ENCODE measurements at regions of chr11 and their contacts with region 1.

Region 1: DNA sequence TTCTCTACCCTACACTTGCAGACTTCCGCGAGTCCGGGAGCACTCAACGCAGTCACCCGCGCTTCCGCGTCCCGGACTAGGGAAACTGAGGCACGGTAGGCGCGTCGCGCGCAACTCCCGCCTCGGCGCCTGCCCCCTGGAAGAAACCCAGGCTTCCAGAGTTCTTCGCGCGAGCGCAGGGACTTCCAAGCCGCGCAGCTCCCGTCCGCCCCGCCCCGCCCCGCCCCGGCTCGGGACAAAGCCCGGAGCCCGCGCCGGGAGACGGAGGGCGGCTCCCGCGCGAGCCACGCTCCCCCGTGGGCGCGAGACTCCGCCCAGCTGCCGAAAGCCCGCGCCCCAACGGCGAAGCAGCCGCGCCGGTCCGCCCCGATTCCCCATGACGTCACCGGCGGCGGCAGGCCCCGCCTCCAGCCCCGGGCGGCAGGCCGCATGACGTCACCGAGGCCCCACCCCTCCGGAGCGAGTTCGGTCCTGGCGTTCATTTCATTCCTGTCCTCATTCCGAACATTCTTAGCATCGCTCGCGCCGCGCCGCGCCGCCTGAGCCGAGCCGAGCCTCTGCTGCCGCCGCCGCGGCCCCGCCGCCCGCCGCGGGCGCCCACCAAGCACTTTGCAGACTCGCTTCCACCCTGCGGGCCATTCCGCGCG is at the start of gene TEAD1:
- DNase-seq: peak; percentile 84
- ATAC-seq: peak; percentile 90
- H3K4me3 ChIP-seq: peak within 1 kb of the TSS; percentile 84 to 100 (median 89)
- H3K27ac ChIP-seq: peak within 1 kb of the TSS; percentile 74
- H3K4me1 ChIP-seq: peaks cover 70% of the 10 kb centered on the region
- H3K27me3 ChIP-seq: no peaks in the 10 kb centered on the region
- CTCF ChIP-seq: no peak
- EP300 ChIP-seq: no peak
- POLR2A ChIP-seq: peak in 1 of 2 experiments; percentile 49; a peak in 2 of 4 replicates
- RAD21 ChIP-seq: no peak; the same call in 1 of the 2 replicates
- total RNA-seq, gene TEAD1: 30.5 and 40.7 TPM in 2 replicates

Region 2: GRCh38 chr11:12693479-12694181 is 19.6 kb after region 1 on chr11:
- CTCF ChIA-PET with region 1: no interaction called
- POLR2A ChIA-PET with region 1: interaction called, 20 read pairs
- in situ Hi-C with region 1: no loop called
- intact Hi-C with region 1: loop called (anchors 2 kb)
- DNase-seq: peak; percentile 48
- ATAC-seq: peak; percentile 47
- H3K4me3 ChIP-seq: peak overlapping the region; percentile 2 to 55 (median 6); a peak in 3 of 6 replicates
- H3K27ac ChIP-seq: peak overlapping the region; percentile 94
- H3K4me1 ChIP-seq: peaks cover 78% of the 10 kb centered on the region
- H3K27me3 ChIP-seq: no peaks in the 10 kb centered on the region
- CTCF ChIP-seq: no peak
- EP300 ChIP-seq: no peak
- POLR2A ChIP-seq: no peak
- RAD21 ChIP-seq: no peak

Region 3: DNA sequence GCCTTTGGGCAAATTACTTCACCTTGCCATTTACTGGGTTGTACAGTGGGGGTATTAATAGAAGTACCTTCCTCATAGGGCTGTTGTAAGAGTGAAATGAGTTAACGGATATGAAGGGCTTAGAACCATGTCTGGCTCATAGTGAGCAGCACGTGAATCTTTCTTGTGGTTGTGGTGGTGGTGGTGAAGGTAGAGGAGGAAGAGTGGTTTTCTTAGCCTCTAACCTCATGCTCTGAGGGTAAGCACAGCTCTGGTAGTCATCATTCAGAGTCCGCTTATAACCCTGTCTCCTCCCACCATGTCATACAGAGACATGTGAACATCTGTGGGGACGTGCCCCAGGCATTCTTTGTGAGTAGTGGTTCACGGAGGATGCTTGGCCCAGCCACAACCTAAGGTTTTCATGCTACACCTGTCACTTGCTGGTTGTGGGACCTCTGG is 43.8 kb after region 1 on chr11:
- CTCF ChIA-PET with region 1: no interaction called
- POLR2A ChIA-PET with region 1: no interaction called
- in situ Hi-C with region 1: no loop called
- intact Hi-C with region 1: no loop called
- DNase-seq: no peak
- ATAC-seq: no peak
- H3K4me3 ChIP-seq: no peak overlapping the region
- H3K27ac ChIP-seq: no peak overlapping the region
- H3K4me1 ChIP-seq: peaks cover 23% of the 10 kb centered on the region
- H3K27me3 ChIP-seq: no peaks in the 10 kb centered on the region
- CTCF ChIP-seq: no peak
- EP300 ChIP-seq: no peak
- POLR2A ChIP-seq: no peak
- RAD21 ChIP-seq: no peak

Region 4: GRCh38 chr11:12802418-12803085 is 128.5 kb after region 1 on chr11:
- CTCF ChIA-PET with region 1: no interaction called
- POLR2A ChIA-PET with region 1: no interaction called
- in situ Hi-C with region 1: no loop called
- intact Hi-C with region 1: loop called (anchors 5 kb)
- DNase-seq: peak; percentile 99
- ATAC-seq: peak; percentile 94
- H3K4me3 ChIP-seq: peak overlapping the region in 1 of 3 experiments; percentile 25; a peak in 2 of 6 replicates
- H3K27ac ChIP-seq: peak overlapping the region; percentile 96
- H3K4me1 ChIP-seq: peaks cover 94% of the 10 kb centered on the region
- H3K27me3 ChIP-seq: no peaks in the 10 kb centered on the region
- CTCF ChIP-seq: no peak
- EP300 ChIP-seq: peak; percentile 95 to 98
- POLR2A ChIP-seq: peak in 1 of 2 experiments; percentile 57; a peak in 1 of 4 replicates
- RAD21 ChIP-seq: peak; percentile 13; the same call in 1 of the 2 replicates

Region 5: GRCh38 chr11:12845739-12846358 is 171.8 kb after region 1 on chr11:
- CTCF ChIA-PET with region 1: no interaction called
- POLR2A ChIA-PET with region 1: interaction called, 8 read pairs
- in situ Hi-C with region 1: no loop called
- intact Hi-C with region 1: loop called (anchors 2 kb)
- DNase-seq: peak; percentile 98
- ATAC-seq: peak; percentile 97
- H3K4me3 ChIP-seq: peak overlapping the region; percentile 38 to 66 (median 51)
- H3K27ac ChIP-seq: peak overlapping the region; percentile 99
- H3K4me1 ChIP-seq: peaks cover 68% of the 10 kb centered on the region
- H3K27me3 ChIP-seq: no peaks in the 10 kb centered on the region
- CTCF ChIP-seq: no peak
- EP300 ChIP-seq: peak; percentile 85 to 90
- POLR2A ChIP-seq: peak; percentile 59 to 82; a peak in 3 of 4 replicates
- RAD21 ChIP-seq: no peak

Region 6: GRCh38 chr11:12864316-12865156 is 190.5 kb after region 1 on chr11:
- CTCF ChIA-PET with region 1: no interaction called
- POLR2A ChIA-PET with region 1: no interaction called
- in situ Hi-C with region 1: no loop called
- intact Hi-C with region 1: no loop called
- DNase-seq: no peak
- ATAC-seq: no peak
- H3K4me3 ChIP-seq: no peak overlapping the region
- H3K27ac ChIP-seq: no peak overlapping the region
- H3K4me1 ChIP-seq: peaks cover 9% of the 10 kb centered on the region; the same call in 1 of the 2 replicates
- H3K27me3 ChIP-seq: no peaks in the 10 kb centered on the region
- CTCF ChIP-seq: no peak
- EP300 ChIP-seq: no peak
- POLR2A ChIP-seq: no peak
- RAD21 ChIP-seq: no peak

Region 7: DNA sequence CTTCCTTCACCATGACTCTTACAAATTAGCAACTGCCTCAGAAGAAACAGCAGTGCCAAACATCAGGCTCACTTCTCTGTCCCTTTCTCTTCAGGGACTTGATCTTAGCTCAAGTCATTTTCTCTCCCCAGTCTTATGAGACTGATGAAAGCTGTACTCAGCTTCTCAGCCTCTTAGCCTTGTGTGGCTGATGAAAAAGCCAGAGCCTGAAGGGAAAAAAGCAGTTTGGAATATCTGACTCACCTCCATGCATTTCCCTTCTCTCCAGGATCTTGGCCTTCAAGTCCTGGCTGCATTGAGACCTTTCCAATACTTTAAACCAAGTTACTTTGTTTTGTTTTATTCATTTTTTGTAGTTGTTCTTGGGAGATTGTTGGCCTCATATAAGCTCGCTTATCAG is 1484.3 kb after region 1 on chr11:
- CTCF ChIA-PET with region 1: no interaction called
- POLR2A ChIA-PET with region 1: no interaction called
- in situ Hi-C with region 1: no loop called
- intact Hi-C with region 1: no loop called
- DNase-seq: no peak
- ATAC-seq: no peak
- H3K4me3 ChIP-seq: no peak overlapping the region
- H3K27ac ChIP-seq: no peak overlapping the region
- H3K4me1 ChIP-seq: no peaks in the 10 kb centered on the region
- H3K27me3 ChIP-seq: no peaks in the 10 kb centered on the region
- CTCF ChIP-seq: no peak
- EP300 ChIP-seq: no peak
- POLR2A ChIP-seq: no peak
- RAD21 ChIP-seq: no peak

Measured in HepG2 (cell line).